GM13976 (cell line): ENCODE measurements at regions of chr10 and their contacts with region 1.

Region 1: DNA sequence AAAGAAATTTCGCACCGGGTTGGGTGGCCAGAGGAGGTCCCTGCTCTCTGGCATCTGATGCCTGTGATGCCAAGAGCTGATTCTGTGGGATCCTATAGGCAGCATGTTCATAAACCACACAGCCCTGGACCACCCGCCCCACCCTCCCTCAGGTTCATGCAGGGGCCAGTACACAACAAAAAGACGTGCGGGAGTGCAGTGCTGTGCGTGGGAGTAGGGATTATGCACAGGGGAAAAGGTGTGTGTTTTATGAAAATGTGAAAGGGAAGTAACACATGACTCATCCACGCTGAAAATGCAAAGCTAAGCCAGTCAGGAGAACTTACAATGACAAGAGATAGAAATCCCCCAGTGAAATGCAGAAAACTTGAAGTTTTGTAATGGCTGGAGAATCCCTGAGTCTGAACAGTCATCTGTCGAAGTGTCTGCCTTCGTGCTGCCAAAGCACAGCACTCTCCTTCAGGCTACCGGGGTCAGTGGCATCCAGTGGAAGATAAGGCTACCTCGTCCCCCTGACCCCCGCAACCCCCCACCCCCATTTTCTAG is 1.1 kb downstream of the KIAA1217 start:
- DNase-seq: peak; percentile 76
- CTCF ChIP-seq: no peak

Region 2: DNA sequence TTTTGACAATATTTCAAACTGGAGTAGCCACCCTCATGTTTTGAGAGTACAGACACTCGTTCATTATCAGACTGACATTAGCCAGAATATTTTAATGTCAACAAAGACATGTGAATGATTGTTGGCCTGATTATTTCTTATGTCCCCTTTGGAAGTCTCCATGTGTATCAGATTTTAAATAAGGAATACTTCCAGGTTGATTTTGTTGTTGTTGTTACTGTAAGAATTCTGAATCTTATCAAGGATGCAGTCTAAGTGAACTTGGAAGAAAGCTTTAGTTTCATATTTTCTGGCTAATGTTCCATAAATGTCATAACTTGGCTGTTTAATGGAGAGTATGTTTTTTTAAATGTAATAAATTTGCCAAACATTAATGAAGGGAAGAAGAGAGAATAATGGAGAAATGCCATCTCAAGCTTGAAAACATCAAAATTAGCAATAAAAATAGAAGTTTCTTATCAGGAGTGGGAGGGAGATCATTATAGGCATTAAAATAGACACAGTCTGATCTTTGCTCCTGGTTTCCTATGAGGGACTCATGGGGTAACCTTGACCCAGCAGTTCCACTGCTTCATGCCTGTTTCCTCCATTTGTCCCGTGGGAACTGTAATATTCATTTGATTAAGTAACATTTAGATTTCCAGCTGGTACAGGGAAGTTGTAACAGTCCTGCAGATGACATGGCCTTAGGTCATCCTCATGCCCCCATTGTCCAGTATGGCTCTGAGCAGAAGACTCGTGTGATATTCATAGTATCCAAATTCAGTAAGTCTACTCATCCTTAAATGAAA is 123.5 kb before region 1 on chr10:
- in situ Hi-C with region 1: no loop called
- DNase-seq: no peak
- CTCF ChIP-seq: no peak

Region 3: DNA sequence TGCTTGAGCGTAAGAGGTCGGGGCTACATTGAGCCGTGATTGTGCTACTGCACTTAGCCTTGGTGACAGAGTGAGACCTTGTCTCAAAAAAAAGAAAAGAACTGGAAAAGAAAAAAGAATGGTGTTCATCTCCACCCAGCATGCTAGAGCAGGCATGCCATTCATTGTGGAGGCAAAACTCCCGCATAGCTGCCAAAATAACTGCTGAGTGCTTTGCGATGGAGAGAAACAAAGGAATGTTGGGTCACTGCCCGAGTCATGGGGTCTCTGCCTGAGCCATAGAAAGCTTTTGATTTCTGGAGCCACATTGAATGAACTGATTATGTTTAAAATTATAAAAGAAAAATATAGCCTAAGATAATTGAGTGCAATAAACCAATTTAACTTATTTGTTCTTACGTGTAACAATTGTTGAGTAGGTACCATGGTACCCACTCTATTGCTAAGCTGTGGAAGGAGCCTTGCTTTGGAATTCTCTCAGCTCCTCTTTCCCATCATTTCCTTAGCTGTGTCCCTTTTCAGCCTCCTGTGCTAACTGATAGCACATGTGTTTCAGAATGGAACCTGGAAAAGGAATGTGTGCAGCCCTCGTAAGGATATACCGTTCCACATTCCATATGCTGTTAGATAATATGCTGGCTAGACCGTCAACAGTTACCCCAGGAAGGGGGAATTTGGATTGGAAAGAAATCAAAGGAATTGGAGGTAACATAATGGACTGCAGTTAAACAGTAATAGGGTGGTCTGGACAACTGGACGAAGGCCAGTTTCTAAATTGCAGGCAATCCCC is 97.9 kb after region 1 on chr10:
- in situ Hi-C with region 1: no loop called
- DNase-seq: no peak
- CTCF ChIP-seq: no peak

Region 4: GRCh38 chr10:24360282-24361127 is 150.5 kb after region 1 on chr10:
- in situ Hi-C with region 1: loop called (anchors 10 kb)
- DNase-seq: peak; percentile 59
- CTCF ChIP-seq: peak; percentile 66

Region 5: DNA sequence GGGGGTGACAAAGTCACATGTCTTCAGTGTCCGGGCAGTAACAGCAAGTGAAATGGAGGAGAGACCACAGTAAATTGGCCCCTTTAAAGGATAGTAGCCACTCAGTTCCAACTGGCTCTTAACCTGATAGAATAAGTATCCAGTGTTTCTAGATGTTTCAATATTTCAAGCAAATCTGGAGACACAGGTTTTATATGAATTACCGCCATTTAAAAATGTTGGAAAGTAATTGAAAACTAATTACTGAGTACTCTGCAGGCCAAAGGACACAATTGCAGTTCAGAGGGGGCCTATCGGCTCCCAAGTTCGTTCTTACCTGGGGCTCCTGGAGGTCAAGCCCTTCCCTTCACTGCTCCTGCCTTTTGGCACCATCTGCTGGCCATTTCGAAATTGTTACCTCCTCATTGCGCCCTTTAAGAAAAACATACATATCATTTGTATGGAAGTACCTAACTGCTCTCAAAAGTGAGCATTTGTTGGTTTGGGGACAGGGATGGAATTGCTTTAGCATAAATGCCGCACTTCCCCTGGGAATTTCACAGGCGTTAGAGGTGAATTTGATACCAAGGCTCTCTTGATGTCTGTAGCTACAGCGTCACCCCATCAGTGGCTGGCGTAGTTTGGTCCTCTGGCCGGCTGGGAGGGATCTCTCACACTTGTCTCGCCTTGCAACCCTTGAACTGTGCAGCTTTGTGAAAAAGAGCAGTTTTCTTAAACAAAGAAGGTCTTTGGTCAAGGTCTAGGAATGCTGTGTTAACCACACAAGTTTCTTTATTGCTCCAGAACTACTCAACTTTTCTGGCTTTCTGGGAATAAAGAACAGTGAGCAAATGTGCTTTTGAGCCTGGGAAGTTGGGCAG is 293.7 kb after region 1 on chr10:
- in situ Hi-C with region 1: loop called (anchors 10 kb)
- DNase-seq: peak; percentile 64
- CTCF ChIP-seq: peak; percentile 62